Right ventricle myocardium superior (tissue), 1 donor: ENCODE measurements at regions of chr1 and their contacts with region 1.

Region 1: DNA sequence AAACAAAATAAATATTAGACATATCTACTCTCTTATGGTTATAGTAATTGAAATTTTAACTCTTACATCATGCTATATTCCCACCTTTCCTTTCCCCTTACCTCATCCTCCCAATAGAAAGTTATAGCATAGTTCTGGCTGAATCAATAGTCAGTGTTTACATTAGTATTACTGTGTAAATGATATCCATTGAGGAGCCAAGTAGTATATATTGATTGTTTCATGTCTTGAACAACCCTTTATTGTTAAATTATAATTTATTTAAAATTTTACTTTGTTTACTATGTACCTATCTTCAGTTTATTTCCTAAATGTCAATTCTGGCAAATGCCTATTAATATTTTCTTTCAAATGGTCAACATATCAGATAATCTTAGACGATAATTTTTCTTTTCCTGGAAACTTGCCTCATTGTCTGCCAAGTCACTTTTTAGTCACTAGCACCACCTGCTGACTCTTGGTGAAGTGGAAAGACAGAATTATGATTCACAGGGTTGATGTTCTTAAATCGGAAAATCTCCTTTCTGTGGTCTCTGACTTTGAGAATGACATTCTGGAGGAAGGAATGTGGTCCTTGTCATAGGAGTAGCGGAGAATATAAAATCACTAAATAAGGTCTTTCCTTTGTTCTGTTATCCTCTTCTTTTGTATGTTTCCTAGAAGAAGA is 8.7 kb downstream of the HJV start:
- DNase-seq: no peak
- ATAC-seq: peak; percentile 44

Region 2: DNA sequence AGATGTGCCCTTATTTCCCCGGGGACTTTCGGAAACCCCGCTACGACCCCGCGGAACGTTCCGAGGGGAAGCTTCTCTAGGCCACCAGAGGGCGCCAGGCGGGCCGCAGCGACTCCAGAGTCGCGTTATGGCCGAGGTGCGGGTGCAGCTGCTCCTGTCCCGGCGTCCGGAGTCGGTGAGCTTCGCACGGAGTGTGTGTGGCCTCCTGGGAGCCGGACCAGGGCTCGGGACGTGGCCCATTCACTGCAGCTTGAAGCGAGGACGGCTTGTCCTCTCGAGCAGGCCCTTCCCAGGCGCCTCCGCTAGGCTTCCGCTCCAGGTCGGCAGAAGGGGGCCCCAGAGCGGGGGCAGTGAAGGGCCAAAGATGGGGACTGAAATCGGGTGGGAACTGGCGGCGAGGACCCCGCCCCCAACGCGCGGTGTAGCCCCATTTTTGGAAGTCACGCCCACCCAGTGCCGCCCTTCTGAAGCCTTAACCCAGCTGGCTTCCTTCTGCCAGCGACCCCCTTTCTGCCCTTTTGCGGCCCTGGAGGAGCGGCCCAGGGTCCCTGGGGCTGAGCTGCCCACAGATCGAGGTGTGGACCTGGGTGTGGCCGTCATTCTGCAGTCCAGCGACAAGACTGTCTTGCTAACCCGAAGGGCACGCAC is 167.2 kb before region 1 on chr1 and contains the start of gene NUDT17:
- intact Hi-C with region 1: loop called (anchors 5 kb)
- DNase-seq: peak; percentile 90
- ATAC-seq: peak; percentile 94
- total RNA-seq, gene NUDT17: 2.9 TPM

Region 3: DNA sequence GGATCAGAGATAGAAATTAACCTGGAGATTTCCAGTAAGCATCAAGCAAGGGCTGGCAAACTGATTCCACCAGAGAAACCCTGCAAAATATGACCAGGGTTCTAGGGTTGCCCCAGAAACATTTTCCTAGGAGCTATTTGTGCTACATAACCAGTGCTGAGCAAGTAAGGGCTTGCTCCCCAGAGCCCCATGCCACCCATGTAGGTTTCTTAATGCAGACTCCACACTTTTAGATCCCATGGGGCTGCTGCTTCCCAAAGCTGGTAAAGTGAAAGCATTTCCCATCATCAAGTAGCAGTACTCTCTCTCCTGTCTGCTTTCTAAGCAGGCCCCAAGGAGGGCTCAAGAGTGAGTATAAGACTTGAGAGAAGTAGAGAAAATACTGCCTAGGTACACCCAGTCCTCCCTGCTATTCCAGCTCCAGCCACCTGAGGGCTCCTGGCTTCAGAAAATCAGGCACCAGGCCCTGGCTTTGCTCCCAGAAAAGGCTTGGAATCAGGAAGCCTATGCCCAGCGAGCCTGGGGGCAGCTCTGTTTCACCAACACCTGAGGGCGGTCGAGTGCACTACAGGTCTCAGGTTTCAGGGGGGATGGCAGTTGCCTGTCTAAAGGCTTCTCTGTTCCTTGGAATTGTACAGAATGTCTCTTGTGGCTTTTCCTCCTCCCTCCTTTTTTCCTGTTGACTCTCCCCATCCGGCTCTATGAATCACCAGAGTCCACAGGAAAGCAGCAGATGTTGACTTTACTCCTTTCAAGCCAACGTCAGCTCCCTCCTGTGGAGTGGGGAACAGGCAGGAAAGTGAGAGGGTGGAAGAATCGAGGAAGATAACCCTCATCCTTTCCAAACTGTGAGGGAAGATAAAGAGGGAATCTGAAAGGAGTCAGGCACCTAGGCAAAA is 121.0 kb before region 1 on chr1:
- intact Hi-C with region 1: loop called (anchors 2 kb)
- DNase-seq: peak; percentile 93
- ATAC-seq: peak; percentile 91

Region 4: GRCh38 chr1:145918144-145918992 is 94.5 kb before region 1 on chr1 and contains the start of gene PEX11B:
- intact Hi-C with region 1: no loop called
- DNase-seq: peak; percentile 93
- ATAC-seq: peak; percentile 97
- total RNA-seq, gene PEX11B: 22.3 TPM

Region 5: DNA sequence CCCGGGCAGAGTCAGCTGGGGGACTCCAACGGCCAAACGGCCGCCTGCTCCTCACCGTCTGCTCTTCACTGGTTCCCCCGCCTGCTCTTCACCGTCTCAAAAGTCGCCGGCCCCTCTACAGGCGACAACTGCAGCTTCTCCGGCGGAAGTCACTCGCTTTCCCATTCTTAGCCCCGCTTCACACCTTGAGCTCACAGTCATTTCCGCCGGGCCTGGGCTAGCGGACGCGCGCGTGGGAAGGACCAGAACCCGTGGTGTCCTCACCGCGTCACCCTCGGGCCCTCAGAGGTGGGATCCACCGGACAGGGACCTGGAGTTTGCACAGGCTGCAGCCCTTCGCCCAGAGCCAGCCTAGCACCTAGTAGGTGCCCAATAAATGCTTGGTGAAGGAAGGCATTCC is 36.6 kb after region 1 on chr1:
- intact Hi-C with region 1: no loop called
- DNase-seq: peak; percentile 15
- ATAC-seq: no peak